ENCODE measurements at regions of chr10 and their contacts with region 1.

Region 1: DNA sequence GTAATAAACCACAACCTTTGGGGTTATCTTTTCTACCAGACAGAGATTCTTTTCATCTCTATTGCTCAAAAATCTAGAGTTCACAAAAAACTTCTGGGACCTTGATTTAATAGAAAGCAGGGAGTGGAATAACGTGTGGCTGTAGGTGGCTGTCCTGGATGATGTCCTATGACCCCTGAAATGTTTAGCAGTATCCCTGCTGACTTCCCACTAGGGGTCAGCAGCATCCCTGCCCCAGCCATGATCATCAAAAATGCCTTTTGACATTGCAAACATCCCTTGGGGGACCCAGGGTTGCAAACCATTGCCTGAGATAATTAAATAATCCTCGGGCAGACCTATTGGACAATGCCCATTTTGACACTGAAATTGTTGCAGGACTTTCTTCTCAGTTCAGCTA is 177.1 kb downstream of the USP6NL start:
- DNase-seq: no peak
- ATAC-seq: no peak
- H3K4me3 ChIP-seq: no peak overlapping the region
- H3K4me3 Mint-ChIP-seq: no peak overlapping the region
- H3K27ac ChIP-seq: no peak overlapping the region
- H3K27ac Mint-ChIP-seq: no peak overlapping the region
- H3K4me1 ChIP-seq: no peaks in the 10 kb centered on the region
- H3K4me1 Mint-ChIP-seq: no peaks in the 10 kb centered on the region
- H3K27me3 ChIP-seq: no peaks in the 10 kb centered on the region
- H3K27me3 Mint-ChIP-seq: peaks cover 13% of the 10 kb centered on the region
- CTCF ChIP-seq: no peak

Region 2: DNA sequence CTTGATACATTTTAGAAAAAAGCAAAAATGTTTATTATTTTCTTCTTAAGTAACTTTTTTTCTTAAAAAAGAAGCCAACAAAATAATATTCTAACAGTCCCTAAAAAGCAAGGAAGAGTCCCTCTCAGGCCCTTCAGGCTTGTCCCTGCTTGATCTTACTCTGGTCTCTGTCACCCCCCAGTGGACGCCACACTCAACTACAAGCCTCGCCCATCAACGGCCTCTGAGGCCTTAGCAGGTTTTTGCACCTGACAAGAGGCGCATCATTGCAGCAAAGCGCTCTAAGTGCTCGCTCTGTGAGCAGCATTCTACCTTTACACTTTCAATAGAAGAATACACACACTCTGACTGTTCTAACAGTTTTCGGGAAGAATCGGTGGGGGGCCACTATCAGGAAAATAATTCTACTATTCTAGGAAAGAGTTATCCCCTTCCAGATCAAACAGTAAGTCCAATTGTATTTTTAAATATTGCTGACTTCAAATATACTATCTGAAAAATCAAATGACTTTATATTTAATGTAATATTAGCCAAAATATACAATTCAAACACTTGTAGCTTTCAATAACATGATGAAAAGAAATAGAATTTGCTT is 37.9 kb after region 1 on chr10:
- CTCF ChIA-PET with region 1: no interaction called
- POLR2A ChIA-PET with region 1: no interaction called
- intact Hi-C with region 1: loop called (anchors 1 kb)
- DNase-seq: peak; percentile 73
- ATAC-seq: peak; percentile 81
- H3K4me3 ChIP-seq: no peak overlapping the region
- H3K4me3 Mint-ChIP-seq: no peak overlapping the region
- H3K27ac ChIP-seq: no peak overlapping the region
- H3K27ac Mint-ChIP-seq: peak overlapping the region; percentile 61
- H3K4me1 ChIP-seq: peaks cover 4 to 5% of the 10 kb centered on the region in 2 donors
- H3K4me1 Mint-ChIP-seq: peaks cover 12% of the 10 kb centered on the region
- H3K27me3 ChIP-seq: no peaks in the 10 kb centered on the region
- H3K27me3 Mint-ChIP-seq: no peaks in the 10 kb centered on the region
- CTCF ChIP-seq: peak; percentile 93